Activated naive CD4-positive, alpha-beta T cell treated with anti-CD3 and anti-CD28 coated beads for 36 hours (primary cell): ENCODE measurements at regions of chr6 and their contacts with region 1.

Region 1: GRCh38 chr6:17820055-17820454 is 113.3 kb upstream of the NUP153 start:
- DNase-seq: no peak
- H3K4me3 Mint-ChIP-seq: no peak overlapping the region
- H3K27ac Mint-ChIP-seq: no peak overlapping the region
- H3K4me1 Mint-ChIP-seq: no peaks in the 10 kb centered on the region
- H3K27me3 Mint-ChIP-seq: peaks cover 7% of the 10 kb centered on the region

Region 2: GRCh38 chr6:17156112-17156921 is 663.7 kb before region 1 on chr6:
- CTCF ChIA-PET with region 1: no interaction called
- intact Hi-C with region 1: loop called (anchors 1 kb)
- DNase-seq: peak; percentile 76
- H3K4me3 Mint-ChIP-seq: no peak overlapping the region
- H3K27ac Mint-ChIP-seq: no peak overlapping the region
- H3K4me1 Mint-ChIP-seq: no peaks in the 10 kb centered on the region
- H3K27me3 Mint-ChIP-seq: peaks cover 9% of the 10 kb centered on the region

Region 3: DNA sequence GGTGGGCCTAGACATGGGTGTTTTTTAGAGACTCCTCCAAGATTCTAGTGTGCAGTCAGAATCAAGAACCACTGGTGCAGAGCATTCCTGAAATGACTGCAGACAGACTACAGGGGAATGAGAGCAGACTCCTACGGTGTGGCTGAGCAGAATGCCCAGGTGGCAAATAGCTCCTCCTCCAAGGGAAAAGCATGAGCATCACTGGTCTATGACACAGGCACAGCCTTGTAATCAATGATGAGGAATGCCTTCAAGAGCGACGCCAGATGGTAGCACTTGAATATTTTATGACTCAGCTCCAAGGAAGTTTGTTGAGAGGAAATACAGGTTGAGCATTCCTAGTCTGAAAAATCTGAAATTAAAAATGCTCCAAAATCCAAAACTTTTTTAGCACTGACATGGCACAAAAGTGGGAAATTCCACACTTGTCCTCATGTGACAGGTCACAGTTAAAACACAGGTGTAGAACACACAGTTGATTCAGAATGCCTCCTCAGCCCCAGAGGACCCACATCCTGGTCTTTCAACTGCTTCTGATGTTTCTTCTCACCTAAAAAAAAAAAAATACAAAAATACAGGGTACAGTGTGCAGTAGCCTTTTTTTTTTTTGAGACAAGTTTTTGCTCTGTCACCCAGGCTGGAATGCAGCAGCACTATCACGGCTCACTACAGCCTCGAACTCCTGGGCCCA is 230.5 kb before region 1 on chr6:
- CTCF ChIA-PET with region 1: interaction called, 14 read pairs
- intact Hi-C with region 1: loop called (anchors 1 kb)
- DNase-seq: peak; percentile 46
- H3K4me3 Mint-ChIP-seq: no peak overlapping the region
- H3K27ac Mint-ChIP-seq: no peak overlapping the region
- H3K4me1 Mint-ChIP-seq: peaks cover 13% of the 10 kb centered on the region
- H3K27me3 Mint-ChIP-seq: no peaks in the 10 kb centered on the region

Region 4: GRCh38 chr6:17700421-17701416 is 119.3 kb before region 1 on chr6:
- CTCF ChIA-PET with region 1: interaction called, 3 read pairs
- intact Hi-C with region 1: loop called (anchors 5 kb)
- DNase-seq: no peak
- H3K4me3 Mint-ChIP-seq: no peak overlapping the region
- H3K27ac Mint-ChIP-seq: peak overlapping the region; percentile 18
- H3K4me1 Mint-ChIP-seq: peaks cover 56% of the 10 kb centered on the region
- H3K27me3 Mint-ChIP-seq: no peaks in the 10 kb centered on the region

Region 5: DNA sequence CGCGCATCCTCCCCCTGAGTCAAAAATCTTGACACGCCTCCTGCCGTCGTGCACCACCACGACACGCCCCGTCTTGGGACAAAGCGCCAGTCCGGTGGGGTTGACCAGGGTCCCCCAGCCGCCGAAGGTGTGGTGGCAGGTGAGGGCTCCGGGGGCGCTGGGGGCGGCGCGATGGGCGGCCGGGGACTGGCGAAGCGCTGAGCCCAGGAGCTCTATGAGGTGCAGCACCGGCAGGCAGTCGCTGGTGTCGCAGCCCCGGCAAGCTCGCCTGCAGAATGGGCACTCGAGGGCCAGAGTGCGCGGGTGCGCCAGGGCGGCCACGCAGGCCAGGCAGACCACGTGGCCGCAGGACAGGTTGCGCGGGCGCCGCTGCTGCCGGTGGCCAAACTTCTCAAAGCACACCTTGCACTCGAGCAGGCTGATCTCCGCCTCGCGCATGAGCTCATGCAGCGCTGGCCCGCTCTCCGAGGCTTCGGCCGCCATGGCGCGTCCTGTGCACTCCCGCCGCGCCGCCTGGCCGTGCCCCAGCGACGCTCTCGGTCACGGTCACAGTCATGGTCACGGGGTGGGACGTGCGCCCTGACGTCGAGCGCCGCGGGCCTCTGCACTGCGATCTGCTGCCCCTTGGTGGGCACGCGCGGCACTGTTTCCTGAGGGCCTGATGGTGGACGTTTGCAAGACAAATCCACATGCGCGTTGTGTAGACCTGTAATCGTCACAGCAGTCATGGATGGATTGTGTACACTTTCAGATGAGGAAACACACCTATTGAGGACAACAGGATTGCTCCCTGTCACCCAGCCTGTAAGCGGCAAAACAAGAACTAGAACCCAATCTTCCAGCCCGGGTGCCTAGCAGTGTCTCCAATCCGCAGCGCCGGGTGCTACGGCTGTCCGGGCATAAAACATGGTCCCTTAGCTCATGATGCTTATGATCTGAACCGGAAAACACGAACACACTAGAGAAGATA is 302.4 kb after region 1 on chr6 and contains the start of gene NHLRC1:
- CTCF ChIA-PET with region 1: no interaction called
- intact Hi-C with region 1: loop called (anchors 5 kb)
- DNase-seq: peak; percentile 85
- H3K4me3 Mint-ChIP-seq: peak within 1 kb of the TSS; percentile 67
- H3K27ac Mint-ChIP-seq: no peak within 1 kb of the TSS
- H3K4me1 Mint-ChIP-seq: peaks cover 9% of the 10 kb centered on the region
- H3K27me3 Mint-ChIP-seq: peaks cover 25% of the 10 kb centered on the region
- total RNA-seq, gene NHLRC1: 0.10 to 0.25 TPM